Sciatic nerve (tissue), 2 donors: ENCODE measurements at regions of chr12 and their contacts with region 1.

Region 1: DNA sequence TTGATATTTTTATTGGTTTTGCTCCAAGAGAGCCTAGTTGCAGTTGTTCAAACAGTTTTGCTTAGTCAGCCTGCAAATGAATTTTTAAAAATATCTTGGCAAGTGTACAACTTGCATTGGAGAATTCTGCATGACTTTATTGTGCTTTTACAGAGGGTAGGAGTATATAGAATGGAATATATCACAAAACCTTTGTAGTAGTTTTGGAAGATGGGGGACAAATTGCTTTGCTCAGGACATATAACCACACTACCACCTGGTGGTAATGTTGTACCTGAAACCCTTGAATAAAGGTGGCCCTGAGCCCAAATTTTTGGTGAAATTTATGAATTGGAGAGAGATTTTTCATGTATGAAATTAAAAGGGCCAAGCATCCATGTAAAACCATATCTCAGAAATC is 645.2 kb downstream of the MED13L start:
- DNase-seq: no peak
- ATAC-seq: no peak

Region 2: DNA sequence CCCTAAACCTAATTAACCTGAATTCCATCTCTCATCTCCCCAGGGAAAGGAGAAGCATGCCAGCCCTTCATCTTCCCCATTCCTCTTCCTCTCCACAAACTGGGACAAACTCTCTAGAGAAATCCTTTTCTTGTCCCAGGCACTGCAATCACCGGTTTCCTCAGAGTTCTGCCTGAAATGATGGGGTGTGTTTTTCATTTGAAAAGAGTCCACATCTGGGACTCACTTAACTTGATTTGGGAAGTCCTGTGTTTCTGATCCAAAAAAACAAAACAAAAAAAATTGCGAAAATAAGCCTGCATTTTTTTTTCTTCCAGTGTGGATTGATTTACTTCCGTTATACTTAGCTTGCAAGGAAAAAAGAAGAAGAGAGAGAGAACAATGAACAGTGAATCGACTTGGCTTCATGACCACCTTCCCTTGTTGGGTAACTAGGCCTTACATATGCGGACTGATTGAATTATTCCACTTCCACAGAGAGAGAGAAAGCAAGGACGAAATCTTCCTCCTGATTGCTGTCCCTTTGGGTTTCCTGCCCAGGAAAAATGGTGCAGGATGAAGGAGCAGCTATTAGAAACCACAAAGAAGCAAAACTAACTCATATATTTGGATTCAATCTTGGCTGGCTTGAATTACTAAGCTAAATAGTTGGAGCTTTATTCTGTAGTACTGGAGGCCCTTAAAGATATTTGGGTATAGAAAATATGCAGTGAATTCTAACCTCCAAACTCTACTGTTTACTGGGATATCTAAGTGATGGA is 442.1 kb before region 1 on chr12:
- intact Hi-C with region 1: loop called (anchors 5 kb)
- DNase-seq: no peak
- ATAC-seq: peak; percentile 64